MCF 10A (cell line): ENCODE measurements at regions of chr1 and their contacts with region 1.

Region 1: GRCh38 chr1:94926915-94927404 is at the start of gene CNN3:
- DNase-seq: peak; percentile 85
- H3K4me3 Mint-ChIP-seq: peak within 1 kb of the TSS; percentile 97
- H3K27ac Mint-ChIP-seq: peak within 1 kb of the TSS; percentile 69
- H3K4me1 Mint-ChIP-seq: peaks cover 22% of the 10 kb centered on the region
- H3K27me3 Mint-ChIP-seq: no peaks in the 10 kb centered on the region
- CTCF ChIP-seq: no peak
- total RNA-seq, gene CNN3: 44.5 and 48.2 TPM in 2 replicates

Region 2: GRCh38 chr1:94873522-94874351 is 53.2 kb before region 1 on chr1:
- CTCF ChIA-PET with region 1: no interaction called
- POLR2A ChIA-PET with region 1: interaction called, 5 read pairs
- intact Hi-C with region 1: loop called (anchors 2 kb)
- DNase-seq: no peak
- H3K4me3 Mint-ChIP-seq: no peak overlapping the region
- H3K27ac Mint-ChIP-seq: no peak overlapping the region
- H3K4me1 Mint-ChIP-seq: peaks cover 23% of the 10 kb centered on the region
- H3K27me3 Mint-ChIP-seq: no peaks in the 10 kb centered on the region
- CTCF ChIP-seq: no peak

Region 3: DNA sequence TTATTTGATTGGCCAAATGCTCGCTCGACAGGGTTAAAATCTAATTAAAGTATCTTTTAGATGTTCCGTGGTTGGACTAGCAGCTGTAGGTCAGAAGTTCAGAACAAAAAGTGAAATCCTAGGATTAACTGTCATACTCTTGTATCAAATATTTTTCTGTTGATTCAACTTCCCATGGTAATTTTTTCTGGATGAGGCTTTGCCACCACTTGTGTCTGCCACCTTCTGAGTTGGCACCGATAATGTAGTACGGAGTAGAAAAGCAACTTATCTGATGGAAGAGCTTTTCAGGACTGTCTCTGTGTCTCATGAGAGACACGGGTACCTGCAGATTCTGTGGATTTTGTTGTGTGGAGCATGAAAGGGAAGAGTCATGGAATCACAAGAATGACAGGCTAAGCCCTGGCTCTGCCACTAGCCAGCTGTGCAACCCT is 44.5 kb after region 1 on chr1:
- CTCF ChIA-PET with region 1: no interaction called
- POLR2A ChIA-PET with region 1: no interaction called
- intact Hi-C with region 1: loop called (anchors 10 kb)
- DNase-seq: peak; percentile 39
- H3K4me3 Mint-ChIP-seq: no peak overlapping the region
- H3K27ac Mint-ChIP-seq: peak overlapping the region; percentile 10
- H3K4me1 Mint-ChIP-seq: peaks cover 15% of the 10 kb centered on the region
- H3K27me3 Mint-ChIP-seq: no peaks in the 10 kb centered on the region
- CTCF ChIP-seq: no peak